ENCODE measurements at regions of chr18 and their contacts with region 1.

Region 1: GRCh38 chr18:46481048-46481846 is 175.8 kb downstream of the LOXHD1 start:
- DNase-seq: no peak
- H3K4me3 ChIP-seq: no peak overlapping the region
- H3K27ac ChIP-seq: no peak overlapping the region
- H3K4me1 ChIP-seq: no peaks in the 10 kb centered on the region
- H3K27me3 ChIP-seq: peaks cover 0 to 24% (median 0%) of the 10 kb centered on the region in 7 donors
- CTCF ChIP-seq: peak; percentile 65 to 88 (median 76)
- POLR2A ChIP-seq: no peak

Region 2: GRCh38 chr18:46281185-46282176 is 199.8 kb before region 1 on chr18:
- intact Hi-C with region 1: loop called (anchors 5 kb)
- DNase-seq: peak; percentile 86
- H3K4me3 ChIP-seq: no peak overlapping the region
- H3K27ac ChIP-seq: no peak overlapping the region
- H3K4me1 ChIP-seq: peaks cover 5 to 24% (median 14%) of the 10 kb centered on the region in 6 donors
- H3K27me3 ChIP-seq: no peaks in the 10 kb centered on the region
- CTCF ChIP-seq: peak; percentile 62 to 93 (median 87)
- POLR2A ChIP-seq: no peak

Region 3: DNA sequence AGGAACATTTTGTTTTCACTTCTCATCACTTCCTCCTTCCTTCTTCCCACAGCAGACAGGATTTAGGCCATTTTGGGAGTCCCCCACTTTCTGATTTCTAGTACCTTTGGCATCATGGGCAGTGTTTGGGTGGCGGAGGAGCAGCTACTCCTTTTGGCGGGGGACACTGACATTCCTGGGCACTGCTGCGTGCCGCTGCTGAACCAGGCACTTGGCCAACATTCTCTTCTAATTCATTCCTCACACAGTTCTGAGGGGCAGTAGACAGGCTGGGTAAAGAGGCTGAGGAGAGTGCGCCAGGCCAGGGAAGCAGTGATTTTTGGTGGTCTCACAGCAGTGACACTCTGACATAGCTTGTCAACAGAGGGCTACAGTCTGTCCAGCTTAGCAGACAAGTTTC is 94.5 kb before region 1 on chr18:
- intact Hi-C with region 1: no loop called
- DNase-seq: no peak
- H3K4me3 ChIP-seq: no peak overlapping the region
- H3K27ac ChIP-seq: peak overlapping the region in 1 of 8 donors; percentile 15
- H3K4me1 ChIP-seq: peaks cover 0 to 21% (median 15%) of the 10 kb centered on the region in 6 donors
- H3K27me3 ChIP-seq: no peaks in the 10 kb centered on the region
- CTCF ChIP-seq: no peak
- POLR2A ChIP-seq: no peak

Region 4: GRCh38 chr18:47574966-47575365 is 1093.7 kb after region 1 on chr18:
- intact Hi-C with region 1: no loop called
- DNase-seq: no peak
- H3K4me3 ChIP-seq: no peak overlapping the region
- H3K27ac ChIP-seq: no peak overlapping the region
- H3K4me1 ChIP-seq: no peaks in the 10 kb centered on the region
- H3K27me3 ChIP-seq: peaks cover 0 to 32% (median 0%) of the 10 kb centered on the region in 7 donors
- CTCF ChIP-seq: no peak
- POLR2A ChIP-seq: no peak